K562 (cell line): ENCODE measurements at regions of chr6 and their contacts with region 1.

Region 1: GRCh38 chr6:47477497-47478232 is at the start of gene CD2AP:
- DNase-seq: peak; percentile 92 to 97 (median 94)
- ATAC-seq: peak; percentile 81
- H3K4me3 ChIP-seq: peak within 1 kb of the TSS; percentile 85
- H3K27ac ChIP-seq: peak within 1 kb of the TSS; percentile 93
- H3K4me1 ChIP-seq: peaks cover 8 to 17% of the 10 kb centered on the region in 2 experiments; a peak in 4 of 5 replicates
- H3K27me3 ChIP-seq: no peaks in the 10 kb centered on the region
- CTCF ChIP-seq: peak; percentile 28 to 48 (median 42); a peak in 3 of 6 replicates
- EP300 ChIP-seq: no peak
- POLR2A ChIP-seq: peak; percentile 89
- RAD21 ChIP-seq: peak in 1 of 2 experiments; percentile 4; a peak in 3 of 4 replicates
- polyA plus RNA-seq, gene CD2AP: 9.4 to 15.9 TPM

Region 2: GRCh38 chr6:46993846-46994245 is 483.8 kb before region 1 on chr6:
- CTCF ChIA-PET with region 1: no interaction called
- POLR2A ChIA-PET with region 1: no interaction called
- in situ Hi-C with region 1: no loop called
- intact Hi-C with region 1: no loop called
- DNase-seq: no peak
- ATAC-seq: no peak
- H3K4me3 ChIP-seq: no peak overlapping the region
- H3K27ac ChIP-seq: no peak overlapping the region
- H3K4me1 ChIP-seq: no peaks in the 10 kb centered on the region
- H3K27me3 ChIP-seq: no peaks in the 10 kb centered on the region
- CTCF ChIP-seq: no peak
- EP300 ChIP-seq: no peak
- POLR2A ChIP-seq: no peak
- RAD21 ChIP-seq: no peak

Region 3: DNA sequence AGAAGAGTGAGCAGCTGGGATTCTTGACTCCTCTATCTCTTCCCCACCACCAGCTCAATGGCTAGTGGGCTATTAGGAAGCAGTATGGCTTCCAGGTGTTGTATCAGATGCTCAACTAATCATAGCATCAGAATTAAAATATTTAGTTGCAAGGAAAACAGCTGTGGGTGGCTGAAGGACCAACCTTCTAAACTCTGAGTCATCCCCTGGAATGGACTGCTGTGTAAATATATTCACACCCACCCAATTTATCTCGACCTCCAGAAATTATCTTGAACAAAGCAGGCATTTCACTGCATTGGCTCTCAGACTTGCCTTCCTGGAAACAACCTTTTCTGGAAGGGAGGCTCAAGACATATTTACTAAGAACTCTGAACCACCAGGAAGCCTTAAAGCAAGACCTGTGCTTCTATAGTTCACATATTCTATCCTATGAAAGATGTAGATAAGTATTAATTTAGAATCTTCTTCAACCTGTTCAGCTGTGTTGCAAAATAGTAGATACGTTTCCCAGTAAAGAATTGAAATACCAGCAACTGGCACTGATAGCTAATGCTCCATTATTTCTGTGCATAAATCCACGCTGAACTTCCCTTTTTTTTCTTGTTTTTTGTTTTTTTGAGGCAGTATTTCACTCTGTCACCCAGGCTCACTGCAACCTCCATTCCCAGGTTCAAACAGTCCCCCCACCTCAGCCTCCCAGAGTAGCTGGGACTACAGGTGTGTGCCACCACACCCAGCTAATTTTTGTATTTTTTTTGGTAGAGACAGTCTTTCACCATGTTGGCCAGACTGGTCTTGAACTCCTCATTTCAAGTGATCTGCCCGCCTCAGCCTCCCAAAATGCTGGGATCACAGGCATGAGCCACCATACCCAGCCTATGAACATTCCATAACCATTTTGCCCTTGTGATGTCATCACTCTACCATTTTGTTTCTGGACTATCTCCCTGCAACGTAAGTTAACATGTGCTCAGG is 57.0 kb before region 1 on chr6:
- CTCF ChIA-PET with region 1: no interaction called
- POLR2A ChIA-PET with region 1: interaction called, 8 read pairs
- in situ Hi-C with region 1: no loop called
- intact Hi-C with region 1: loop called (anchors 1 kb)
- DNase-seq: peak; percentile 57 to 97 (median 76)
- ATAC-seq: peak; percentile 86
- H3K4me3 ChIP-seq: no peak overlapping the region; the same call in 1 of the 2 replicates
- H3K27ac ChIP-seq: peak overlapping the region; percentile 75
- H3K4me1 ChIP-seq: peaks cover 13 to 50% of the 10 kb centered on the region in 2 experiments; a peak in 4 of 5 replicates
- H3K27me3 ChIP-seq: no peaks in the 10 kb centered on the region
- CTCF ChIP-seq: no peak
- EP300 ChIP-seq: peak; percentile 98
- POLR2A ChIP-seq: no peak
- RAD21 ChIP-seq: peak in 1 of 2 experiments; percentile 22; a peak in 1 of 4 replicates

Region 4: GRCh38 chr6:47465117-47465516 is 12.5 kb before region 1 on chr6:
- CTCF ChIA-PET with region 1: no interaction called
- POLR2A ChIA-PET with region 1: interaction called, 14 read pairs
- in situ Hi-C with region 1: no loop called
- intact Hi-C with region 1: no loop called
- DNase-seq: no peak
- ATAC-seq: peak; percentile 46
- H3K4me3 ChIP-seq: no peak overlapping the region
- H3K27ac ChIP-seq: no peak overlapping the region
- H3K4me1 ChIP-seq: no peaks in the 10 kb centered on the region
- H3K27me3 ChIP-seq: no peaks in the 10 kb centered on the region
- CTCF ChIP-seq: no peak
- EP300 ChIP-seq: no peak
- POLR2A ChIP-seq: no peak
- RAD21 ChIP-seq: no peak

Region 5: DNA sequence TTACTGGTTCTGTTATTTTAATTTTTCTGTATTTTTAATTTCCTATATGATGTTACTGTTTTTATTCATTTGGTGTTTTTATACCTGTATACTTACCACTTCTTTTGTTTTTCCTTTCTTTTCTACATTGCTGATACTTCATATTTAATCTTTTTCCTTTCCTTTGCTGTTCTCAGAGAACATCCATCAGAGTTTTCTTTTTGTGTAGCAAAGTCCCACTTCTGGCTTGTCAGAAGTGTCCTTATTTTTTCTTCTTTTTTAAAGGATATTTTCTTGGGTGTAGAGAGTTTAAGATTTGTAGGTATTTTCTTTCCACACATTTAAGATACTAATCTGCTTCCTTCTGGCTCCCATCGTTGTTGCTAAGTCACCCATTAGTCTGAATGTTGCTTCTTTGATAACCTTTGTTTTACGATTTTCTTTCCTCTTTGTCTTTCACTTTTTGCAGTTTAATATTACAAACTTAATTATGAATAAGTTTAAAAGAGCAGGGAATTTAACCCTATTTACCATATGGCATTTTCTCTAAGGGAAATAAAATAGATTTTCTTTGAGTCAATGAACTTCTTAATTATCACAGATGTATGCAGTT is 18.4 kb after region 1 on chr6:
- CTCF ChIA-PET with region 1: no interaction called
- POLR2A ChIA-PET with region 1: interaction called, 12 read pairs
- in situ Hi-C with region 1: no loop called
- intact Hi-C with region 1: loop called (anchors 1 kb)
- DNase-seq: peak in 1 of 4 experiments; percentile 48
- ATAC-seq: peak; percentile 32
- H3K4me3 ChIP-seq: no peak overlapping the region
- H3K27ac ChIP-seq: peak overlapping the region; percentile 16; the same call in 1 of the 3 replicates
- H3K4me1 ChIP-seq: peaks cover 23 to 25% of the 10 kb centered on the region in 2 experiments
- H3K27me3 ChIP-seq: no peaks in the 10 kb centered on the region
- CTCF ChIP-seq: no peak
- EP300 ChIP-seq: peak; percentile 50; the same call in 1 of the 2 replicates
- POLR2A ChIP-seq: no peak
- RAD21 ChIP-seq: no peak

Region 6: DNA sequence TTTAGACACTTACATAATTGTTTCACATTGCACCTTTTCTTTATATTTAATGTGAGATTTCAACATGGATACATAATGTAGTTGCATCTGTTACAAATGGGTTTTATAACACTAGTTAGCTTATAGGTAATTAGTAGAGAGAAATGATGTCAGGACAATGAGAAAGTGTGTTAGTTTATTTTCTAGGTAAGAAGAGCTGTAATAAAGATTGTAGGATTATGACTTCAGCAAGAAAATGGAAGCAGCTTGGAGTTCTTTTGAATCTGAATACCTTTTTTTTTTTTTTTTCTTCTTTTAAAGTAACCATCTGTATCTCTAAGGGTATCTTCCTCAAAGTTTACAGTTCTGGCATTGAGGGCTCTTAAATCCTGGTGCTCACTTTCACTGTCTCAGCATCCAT is 35.2 kb after region 1 on chr6:
- CTCF ChIA-PET with region 1: no interaction called
- POLR2A ChIA-PET with region 1: interaction called, 11 read pairs
- in situ Hi-C with region 1: no loop called
- intact Hi-C with region 1: no loop called
- DNase-seq: no peak
- ATAC-seq: no peak
- H3K4me3 ChIP-seq: no peak overlapping the region
- H3K27ac ChIP-seq: no peak overlapping the region
- H3K4me1 ChIP-seq: no peaks in the 10 kb centered on the region
- H3K27me3 ChIP-seq: no peaks in the 10 kb centered on the region
- CTCF ChIP-seq: no peak
- EP300 ChIP-seq: no peak
- POLR2A ChIP-seq: no peak
- RAD21 ChIP-seq: no peak

Region 7: DNA sequence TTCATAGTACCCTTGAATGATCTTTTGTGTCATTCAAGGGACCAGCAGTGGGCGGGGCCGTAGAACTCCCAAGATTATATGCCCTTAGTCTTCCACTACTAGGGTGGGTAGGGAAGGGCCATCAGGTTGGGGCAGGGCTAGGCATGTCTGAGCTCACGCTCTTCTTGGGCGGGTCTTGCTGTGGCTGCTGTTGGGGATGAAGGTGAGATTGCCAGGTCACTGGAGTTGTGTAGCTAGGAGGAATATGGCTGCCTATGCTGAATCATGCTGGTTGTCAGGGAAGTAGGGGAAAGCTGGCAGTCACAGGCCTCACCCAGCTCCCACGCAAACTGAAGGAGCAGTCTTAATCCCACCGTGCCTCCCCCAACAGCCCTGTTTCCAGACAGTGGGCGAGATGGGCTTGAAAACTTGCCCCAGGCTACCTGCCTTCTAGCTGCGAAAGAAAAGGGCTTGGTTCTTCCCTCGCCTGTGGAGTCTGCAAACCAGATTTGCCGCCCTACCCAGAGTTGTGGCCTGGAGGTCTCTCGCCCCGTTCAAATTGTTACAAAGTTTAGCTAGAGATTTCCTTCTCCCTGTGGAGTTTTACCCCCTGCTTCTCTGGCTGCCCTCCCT is 144.3 kb after region 1 on chr6:
- CTCF ChIA-PET with region 1: no interaction called
- POLR2A ChIA-PET with region 1: no interaction called
- in situ Hi-C with region 1: no loop called
- intact Hi-C with region 1: loop called (anchors 5 kb)
- DNase-seq: no peak
- ATAC-seq: no peak; the same call in 2 of the 3 replicates
- H3K4me3 ChIP-seq: no peak overlapping the region
- H3K27ac ChIP-seq: no peak overlapping the region
- H3K4me1 ChIP-seq: no peaks in the 10 kb centered on the region
- H3K27me3 ChIP-seq: no peaks in the 10 kb centered on the region
- CTCF ChIP-seq: no peak
- EP300 ChIP-seq: no peak
- POLR2A ChIP-seq: no peak
- RAD21 ChIP-seq: no peak